ENCODE measurements at regions of chrX and their contacts with region 1.

Region 1: GRCh38 chrX:110002300-110003166 is at the start of gene TMEM164:
- DNase-seq: peak; percentile 69
- H3K4me3 ChIP-seq: peak within 1 kb of the TSS; percentile 47 to 50
- H3K27ac ChIP-seq: peak within 1 kb of the TSS; percentile 79 to 88
- H3K4me1 ChIP-seq: no peaks in the 10 kb centered on the region
- H3K27me3 ChIP-seq: no peaks in the 10 kb centered on the region
- CTCF ChIP-seq: peak in 2 of 4 experiments; percentile 20 to 35
- POLR2A ChIP-seq: peak; percentile 6
- total RNA-seq, gene TMEM164: 45.5 to 445 TPM

Region 2: GRCh38 chrX:109464231-109464630 is 538.3 kb before region 1 on chrX:
- intact Hi-C with region 1: no loop called
- DNase-seq: no peak
- H3K4me3 ChIP-seq: no peak overlapping the region
- H3K27ac ChIP-seq: no peak overlapping the region
- H3K4me1 ChIP-seq: no peaks in the 10 kb centered on the region
- H3K27me3 ChIP-seq: no peaks in the 10 kb centered on the region
- CTCF ChIP-seq: no peak
- POLR2A ChIP-seq: no peak

Region 3: DNA sequence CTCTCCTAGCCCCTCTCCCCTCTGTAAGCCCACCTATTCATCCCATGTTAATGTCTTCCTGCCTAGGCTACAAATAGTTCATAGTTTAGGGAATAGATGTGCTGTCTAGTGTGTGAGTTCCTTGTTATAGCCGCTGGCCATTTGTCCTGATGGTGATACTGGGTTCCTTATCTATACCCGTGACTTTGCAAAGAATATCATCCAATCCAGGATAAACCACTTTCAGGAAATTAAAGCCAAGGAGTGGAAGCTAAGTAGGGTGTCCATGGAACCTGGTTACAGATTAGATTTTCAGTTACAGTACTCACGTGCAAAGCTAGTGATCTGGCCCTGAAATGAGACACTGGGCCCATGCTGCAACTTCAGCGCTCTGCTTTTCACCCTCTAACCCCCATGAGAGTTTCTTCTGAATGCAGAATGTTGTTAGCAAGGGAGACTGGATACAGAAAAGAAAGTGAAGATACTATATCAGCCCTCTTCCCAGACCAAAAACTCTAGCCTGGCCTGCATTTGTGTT is 111.8 kb after region 1 on chrX:
- intact Hi-C with region 1: loop called (anchors 10 kb)
- DNase-seq: no peak
- H3K4me3 ChIP-seq: no peak overlapping the region
- H3K27ac ChIP-seq: no peak overlapping the region
- H3K4me1 ChIP-seq: no peaks in the 10 kb centered on the region
- H3K27me3 ChIP-seq: no peaks in the 10 kb centered on the region
- CTCF ChIP-seq: no peak
- POLR2A ChIP-seq: no peak